CD14-positive monocyte (primary cell): ENCODE measurements at regions of chr5 and their contacts with region 1.

Region 1: GRCh38 chr5:10695055-10695649 is 65.9 kb downstream of the DAP start:
- DNase-seq: peak; percentile 49 to 70 (median 59)
- H3K4me3 ChIP-seq: no peak overlapping the region
- H3K4me3 Mint-ChIP-seq: no peak overlapping the region
- H3K27ac ChIP-seq: no peak overlapping the region
- H3K27ac Mint-ChIP-seq: peak overlapping the region in 3 of 7 donors; percentile 28 to 70 (median 38)
- H3K4me1 ChIP-seq: no peaks in the 10 kb centered on the region
- H3K4me1 Mint-ChIP-seq: peaks cover 12% of the 10 kb centered on the region
- H3K27me3 ChIP-seq: no peaks in the 10 kb centered on the region
- H3K27me3 Mint-ChIP-seq: peaks cover 0 to 3% (median 0%) of the 10 kb centered on the region in 3 donors
- CTCF ChIP-seq: peak; percentile 77

Region 2: DNA sequence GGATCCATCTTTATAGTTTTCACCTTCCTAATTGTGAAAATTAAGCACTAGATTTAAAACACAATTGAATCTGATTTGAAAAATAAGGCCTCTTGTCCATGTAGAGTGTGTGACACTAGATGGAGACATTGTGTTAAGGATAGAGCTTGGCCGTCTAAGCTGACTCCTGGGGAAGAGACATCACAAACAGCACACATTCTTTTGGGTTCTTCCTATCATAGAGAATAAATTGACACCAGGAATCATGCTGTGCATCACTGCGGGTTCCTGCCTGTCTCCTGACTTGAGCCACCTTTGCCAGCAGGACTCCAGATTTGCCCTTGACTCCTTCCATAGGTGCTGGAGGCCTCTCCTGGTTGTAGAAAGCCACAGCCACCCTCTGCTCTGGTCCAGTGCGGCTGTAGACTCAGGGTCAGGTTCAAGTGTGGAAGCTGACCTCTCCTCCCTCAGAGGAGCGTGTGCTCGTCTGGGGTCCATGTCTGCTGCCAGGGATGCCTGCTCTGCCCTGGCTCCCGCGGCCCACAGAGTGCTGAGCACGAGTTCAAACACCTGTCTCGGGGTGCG is 242.3 kb before region 1 on chr5:
- intact Hi-C with region 1: loop called in 1 of 2 experiments (anchors 10 kb)
- DNase-seq: peak; percentile 54 to 68 (median 64)
- H3K4me3 ChIP-seq: no peak overlapping the region
- H3K4me3 Mint-ChIP-seq: no peak overlapping the region
- H3K27ac ChIP-seq: no peak overlapping the region
- H3K27ac Mint-ChIP-seq: peak overlapping the region in 2 of 7 donors; percentile 45 to 61
- H3K4me1 ChIP-seq: peaks cover 57 to 62% of the 10 kb centered on the region in 2 donors
- H3K4me1 Mint-ChIP-seq: peaks cover 61% of the 10 kb centered on the region
- H3K27me3 ChIP-seq: no peaks in the 10 kb centered on the region
- H3K27me3 Mint-ChIP-seq: peaks cover 0 to 2% (median 2%) of the 10 kb centered on the region in 3 donors
- CTCF ChIP-seq: peak; percentile 72

Region 3: DNA sequence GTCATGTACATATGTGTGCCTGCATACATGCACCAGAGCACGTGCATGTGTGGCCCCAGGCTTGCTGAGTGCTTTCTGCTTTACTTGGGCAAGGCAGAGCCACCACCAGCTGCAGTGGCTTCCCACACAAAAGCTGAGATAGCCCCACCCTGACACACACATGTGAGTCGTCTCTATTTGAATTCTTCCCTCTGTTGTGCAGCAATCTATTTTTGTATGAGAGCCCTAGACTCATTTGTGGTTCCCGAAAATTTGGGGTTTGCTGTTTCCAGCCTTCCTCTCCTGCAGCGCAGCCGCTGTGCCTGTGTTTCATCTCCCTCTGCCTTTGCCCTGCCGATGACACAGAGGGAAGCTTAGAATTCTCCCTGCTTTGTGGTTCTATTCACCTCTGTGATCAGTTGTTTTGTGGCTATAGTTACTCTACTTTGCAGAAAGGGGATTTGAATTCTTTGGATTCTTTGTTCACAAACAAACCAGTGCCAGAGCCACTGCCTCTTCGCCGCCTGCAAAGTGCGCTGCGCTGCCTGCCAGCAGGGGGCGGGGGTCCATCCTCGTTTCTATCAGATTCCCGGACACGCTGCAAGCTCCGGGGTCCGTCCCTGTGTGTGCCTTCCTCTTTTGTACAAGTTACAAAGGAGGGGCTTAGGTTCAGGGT is 161.7 kb after region 1 on chr5:
- intact Hi-C with region 1: loop called (anchors 10 kb)
- DNase-seq: peak; percentile 25 to 45 (median 42)
- H3K4me3 ChIP-seq: peak overlapping the region in 1 of 3 experiments; percentile 26
- H3K4me3 Mint-ChIP-seq: peak overlapping the region; percentile 62 to 78
- H3K27ac ChIP-seq: no peak overlapping the region
- H3K27ac Mint-ChIP-seq: peak overlapping the region in 2 of 7 donors; percentile 5 to 52
- H3K4me1 ChIP-seq: peaks cover 41 to 44% of the 10 kb centered on the region in 2 donors
- H3K4me1 Mint-ChIP-seq: peaks cover 55% of the 10 kb centered on the region
- H3K27me3 ChIP-seq: peaks cover 0 to 3% of the 10 kb centered on the region in 2 donors
- H3K27me3 Mint-ChIP-seq: peaks cover 1 to 12% (median 12%) of the 10 kb centered on the region in 3 donors
- CTCF ChIP-seq: peak; percentile 92

Region 4: DNA sequence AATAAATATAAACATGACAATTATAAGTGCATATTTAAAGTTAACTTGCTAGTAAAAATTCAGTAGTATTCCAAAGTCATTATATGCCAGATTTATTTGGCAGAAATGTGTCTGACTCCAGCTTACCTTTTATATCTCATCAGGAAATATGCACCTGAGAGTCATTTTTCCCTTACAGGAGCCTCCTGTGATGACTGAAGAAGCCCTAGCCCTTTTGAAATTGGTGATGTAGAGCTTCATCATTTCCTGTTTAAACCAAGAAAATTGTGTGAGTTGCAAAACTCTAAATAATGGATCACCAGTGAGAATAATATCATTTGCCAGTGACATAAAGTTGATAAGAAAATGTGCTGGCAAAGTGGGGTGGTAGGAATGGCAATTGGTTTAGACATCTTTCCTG is 1251.2 kb after region 1 on chr5:
- intact Hi-C with region 1: no loop called
- DNase-seq: no peak
- H3K4me3 ChIP-seq: no peak overlapping the region
- H3K4me3 Mint-ChIP-seq: no peak overlapping the region
- H3K27ac ChIP-seq: no peak overlapping the region
- H3K27ac Mint-ChIP-seq: no peak overlapping the region
- H3K4me1 ChIP-seq: no peaks in the 10 kb centered on the region
- H3K4me1 Mint-ChIP-seq: no peaks in the 10 kb centered on the region
- H3K27me3 ChIP-seq: no peaks in the 10 kb centered on the region
- H3K27me3 Mint-ChIP-seq: no peaks in the 10 kb centered on the region
- CTCF ChIP-seq: no peak